AG04449 (cell line): ENCODE measurements at regions of chr20 and their contacts with region 1.

Region 1: GRCh38 chr20:44475694-44476560 is at the start of gene TTPAL:
- DNase-seq: no peak
- H3K4me3 ChIP-seq: peak within 1 kb of the TSS; percentile 96
- CTCF ChIP-seq: peak; percentile 50

Region 2: DNA sequence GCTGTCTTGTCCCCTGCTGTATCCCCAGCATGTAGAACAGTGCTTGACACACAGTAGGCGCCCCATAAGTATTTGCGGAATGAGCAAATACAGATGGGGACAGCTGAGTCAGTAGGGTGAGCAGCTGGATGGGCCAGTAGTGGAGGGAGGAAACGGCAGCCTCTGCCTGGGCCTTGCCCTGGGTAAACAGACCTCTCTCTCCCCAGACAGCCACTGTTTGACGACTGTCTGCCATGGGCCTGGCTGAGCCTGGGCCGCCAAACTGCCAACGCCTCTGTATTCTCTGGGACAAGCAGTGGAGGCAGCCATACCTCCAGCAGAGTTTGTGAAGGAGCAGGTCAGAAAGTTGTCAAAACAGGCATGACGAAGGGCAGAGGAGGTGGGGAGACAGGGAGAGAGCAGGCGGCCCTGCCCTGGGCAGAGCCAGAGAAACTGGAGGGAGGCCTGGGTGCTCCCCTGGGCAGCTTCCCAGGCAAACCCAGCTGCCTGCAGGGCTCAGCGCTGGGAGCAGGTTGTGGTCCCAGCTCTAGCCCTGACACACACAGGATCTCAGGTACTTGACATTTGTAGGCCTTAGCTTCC is 105.2 kb before region 1 on chr20:
- CTCF ChIA-PET with region 1: no interaction called
- POLR2A ChIA-PET with region 1: no interaction called
- DNase-seq: no peak
- H3K4me3 ChIP-seq: no peak overlapping the region
- CTCF ChIP-seq: no peak

Region 3: DNA sequence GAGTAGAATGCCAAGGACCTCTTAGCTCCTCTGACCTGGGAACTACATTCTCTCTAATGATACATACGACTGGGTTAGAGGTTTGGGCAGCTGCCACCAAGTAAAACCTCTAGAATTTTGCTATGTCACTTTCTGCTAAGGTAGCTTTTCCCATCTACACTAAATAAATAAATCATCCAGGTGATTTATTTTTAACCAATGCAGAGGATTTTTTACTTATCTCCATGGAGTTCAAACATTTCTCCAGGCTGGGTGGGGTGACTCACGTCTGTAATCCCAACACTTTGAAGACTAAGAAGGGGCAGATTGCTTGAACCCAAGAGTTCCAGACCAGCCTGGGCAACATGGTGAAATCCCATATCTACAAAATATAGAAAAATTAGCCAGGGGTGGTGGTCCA is 93.3 kb before region 1 on chr20:
- CTCF ChIA-PET with region 1: interaction called, 59 read pairs
- POLR2A ChIA-PET with region 1: interaction called, 4 read pairs
- DNase-seq: no peak
- H3K4me3 ChIP-seq: no peak overlapping the region
- CTCF ChIP-seq: no peak

Region 4: DNA sequence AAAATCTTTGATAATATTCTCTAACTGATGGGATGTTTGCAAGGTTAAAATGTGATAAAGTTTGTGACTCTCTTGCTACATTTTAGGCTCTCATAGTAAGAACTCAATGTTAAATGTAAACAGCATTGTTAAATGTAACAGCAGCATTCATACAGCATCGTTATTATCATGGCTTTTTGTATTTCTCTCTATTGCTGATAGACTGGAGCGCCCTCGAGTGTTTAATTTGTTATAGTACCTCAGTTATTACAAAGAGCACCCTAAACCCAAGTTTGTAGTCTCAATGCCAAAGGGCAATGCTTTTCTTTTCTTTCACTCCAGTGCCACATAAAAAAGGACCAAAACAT is 15.2 kb before region 1 on chr20:
- CTCF ChIA-PET with region 1: interaction called, 22 read pairs
- POLR2A ChIA-PET with region 1: no interaction called
- DNase-seq: no peak
- H3K4me3 ChIP-seq: no peak overlapping the region
- CTCF ChIP-seq: peak; percentile 9